ENCODE measurements at regions of chr15 and their contacts with region 1.

Region 1: GRCh38 chr15:51093839-51094605 is 684 bp downstream of the TNFAIP8L3 start:
- DNase-seq: peak; percentile 32
- H3K4me3 ChIP-seq: peak overlapping the region; percentile 51 to 75 (median 60)
- H3K27ac ChIP-seq: no peak overlapping the region
- H3K4me1 ChIP-seq: peaks cover 19% of the 10 kb centered on the region
- H3K27me3 ChIP-seq: no peaks in the 10 kb centered on the region
- CTCF ChIP-seq: no peak

Region 2: DNA sequence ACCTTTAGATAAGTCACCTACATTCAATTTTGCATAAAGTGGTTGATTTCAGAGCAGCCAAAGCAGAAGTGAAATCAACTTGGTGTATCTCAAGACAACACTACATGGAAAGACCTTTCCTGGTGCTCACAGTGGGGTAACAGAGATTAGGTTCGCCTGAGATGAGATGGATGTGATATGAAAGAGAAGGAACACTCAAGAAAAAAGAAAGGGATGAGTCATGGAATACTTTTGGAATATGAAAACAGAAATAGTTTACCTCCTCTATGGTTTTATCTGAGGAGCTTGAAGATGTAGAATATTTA is 239.0 kb before region 1 on chr15:
- CTCF ChIA-PET with region 1: no interaction called
- dilution Hi-C with region 1: no loop called
- in situ Hi-C with region 1: no loop called
- intact Hi-C with region 1: no loop called
- DNase-seq: no peak
- H3K4me3 ChIP-seq: no peak overlapping the region
- H3K27ac ChIP-seq: no peak overlapping the region
- H3K4me1 ChIP-seq: peaks cover 15% of the 10 kb centered on the region
- H3K27me3 ChIP-seq: no peaks in the 10 kb centered on the region
- CTCF ChIP-seq: no peak

Region 3: GRCh38 chr15:50945725-50946124 is 148.3 kb before region 1 on chr15:
- CTCF ChIA-PET with region 1: no interaction called
- dilution Hi-C with region 1: no loop called
- in situ Hi-C with region 1: no loop called
- intact Hi-C with region 1: loop called (anchors 10 kb)
- DNase-seq: peak; percentile 35
- H3K4me3 ChIP-seq: no peak overlapping the region
- H3K27ac ChIP-seq: no peak overlapping the region
- H3K4me1 ChIP-seq: no peaks in the 10 kb centered on the region
- H3K27me3 ChIP-seq: no peaks in the 10 kb centered on the region
- CTCF ChIP-seq: no peak

Region 4: DNA sequence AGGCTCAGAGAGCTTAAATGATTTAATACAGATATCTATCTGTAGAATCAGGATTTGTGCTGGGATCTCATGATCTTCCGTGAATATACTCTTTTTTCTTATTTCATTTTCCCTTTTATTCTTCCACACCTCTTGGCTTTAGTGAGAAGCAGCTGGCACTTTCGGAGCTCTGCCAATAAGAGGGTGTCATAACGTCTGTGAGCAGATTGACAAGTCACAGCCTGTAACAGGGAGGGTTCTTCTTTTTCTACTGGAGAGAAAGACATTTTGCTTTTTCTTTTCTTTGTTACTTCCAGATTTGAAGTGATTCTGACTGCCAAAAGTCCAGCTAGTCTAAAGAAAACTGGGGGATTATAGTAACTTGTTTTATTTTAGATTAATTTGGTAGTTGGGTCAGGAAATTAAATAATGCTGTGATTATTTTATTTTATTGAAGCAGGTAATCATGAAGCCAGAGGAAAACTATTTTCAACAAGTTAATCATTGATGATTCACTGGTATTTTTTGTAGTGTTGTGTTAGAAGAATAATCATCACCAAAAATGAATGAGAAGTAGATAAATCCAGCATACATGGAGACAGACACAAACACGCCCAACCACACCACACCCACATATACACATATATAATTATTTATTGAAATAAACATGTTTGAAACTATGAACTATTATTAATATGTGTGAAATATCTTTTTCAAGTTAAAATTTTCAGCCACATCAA is 69.1 kb before region 1 on chr15:
- CTCF ChIA-PET with region 1: no interaction called
- dilution Hi-C with region 1: no loop called
- in situ Hi-C with region 1: no loop called
- intact Hi-C with region 1: loop called (anchors 2 kb)
- DNase-seq: peak; percentile 91
- H3K4me3 ChIP-seq: peak overlapping the region; percentile 24 to 43 (median 29)
- H3K27ac ChIP-seq: peak overlapping the region; percentile 99
- H3K4me1 ChIP-seq: peaks cover 20% of the 10 kb centered on the region
- H3K27me3 ChIP-seq: no peaks in the 10 kb centered on the region
- CTCF ChIP-seq: no peak

Region 5: DNA sequence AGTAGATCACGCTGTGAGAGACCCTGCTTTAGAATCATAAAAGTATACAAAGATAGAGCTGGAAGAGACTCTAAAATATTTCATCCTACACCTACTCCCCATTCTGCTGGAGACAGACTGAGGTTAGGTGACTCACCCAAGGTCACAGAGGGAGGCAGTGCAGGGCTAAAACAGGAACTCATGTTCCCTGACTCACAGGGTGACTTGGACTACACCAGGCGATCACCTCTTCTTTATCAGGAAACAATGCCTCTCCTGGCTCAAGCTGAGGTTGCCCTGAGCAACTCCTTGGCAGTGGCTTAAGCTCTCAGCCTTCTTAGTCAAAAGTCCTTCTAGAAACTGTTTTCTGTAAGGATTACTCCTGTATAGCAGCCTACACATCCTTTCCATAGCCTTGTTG is 27.1 kb after region 1 on chr15:
- CTCF ChIA-PET with region 1: interaction called, 16 read pairs
- dilution Hi-C with region 1: no loop called
- in situ Hi-C with region 1: no loop called
- intact Hi-C with region 1: no loop called
- DNase-seq: peak; percentile 96
- H3K4me3 ChIP-seq: no peak overlapping the region
- H3K27ac ChIP-seq: peak overlapping the region; percentile 55
- H3K4me1 ChIP-seq: peaks cover 16% of the 10 kb centered on the region
- H3K27me3 ChIP-seq: no peaks in the 10 kb centered on the region
- CTCF ChIP-seq: peak in 1 of 2 donors; percentile 10

Region 6: GRCh38 chr15:51144021-51144532 is 50.1 kb after region 1 on chr15:
- CTCF ChIA-PET with region 1: no interaction called
- dilution Hi-C with region 1: loop called (anchors 5 kb)
- in situ Hi-C with region 1: no loop called
- intact Hi-C with region 1: no loop called
- DNase-seq: peak; percentile 77
- H3K4me3 ChIP-seq: no peak overlapping the region
- H3K27ac ChIP-seq: no peak overlapping the region
- H3K4me1 ChIP-seq: peaks cover 9% of the 10 kb centered on the region
- H3K27me3 ChIP-seq: no peaks in the 10 kb centered on the region
- CTCF ChIP-seq: no peak